Common myeloid progenitor, CD34-positive (primary cell): ENCODE measurements at regions of chr12 and their contacts with region 1.

Region 1: DNA sequence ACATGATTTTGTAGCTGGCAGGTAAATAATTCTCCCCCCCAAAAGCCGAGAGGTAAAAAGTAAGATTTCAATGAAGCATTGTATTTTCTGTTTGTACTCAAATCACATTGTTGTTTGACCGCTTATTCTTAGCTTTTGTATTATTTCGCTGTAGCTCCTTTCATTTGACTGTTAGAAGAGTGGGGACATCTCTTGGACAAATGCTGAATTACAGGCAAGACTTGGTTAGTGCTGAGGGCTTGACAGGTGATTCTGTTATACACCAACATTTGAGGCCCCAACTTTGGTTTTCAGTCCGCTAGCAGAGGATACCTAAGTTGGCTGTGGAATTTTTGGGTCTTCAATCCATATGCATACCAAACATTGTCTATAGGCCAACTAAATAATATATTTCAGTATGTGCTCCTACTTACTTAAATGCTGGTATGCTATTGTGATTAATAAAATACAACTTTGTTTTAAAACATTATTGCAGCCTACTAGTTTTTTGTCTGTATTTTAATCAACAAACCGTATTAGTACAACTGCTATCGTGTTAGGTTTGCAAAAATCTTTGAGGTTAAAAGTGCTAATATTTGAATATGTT is 102.2 kb downstream of the ERC1 start:
- DNase-seq: peak; percentile 74 to 86 (median 82)
- H3K4me3 ChIP-seq: no peak overlapping the region
- H3K27ac ChIP-seq: no peak overlapping the region
- H3K4me1 ChIP-seq: no peaks in the 10 kb centered on the region
- H3K27me3 ChIP-seq: no peaks in the 10 kb centered on the region

Region 2: GRCh38 chr12:1104088-1104800 is 11.0 kb after region 1 on chr12:
- CTCF ChIA-PET with region 1: interaction called, 14 read pairs
- POLR2A ChIA-PET with region 1: no interaction called
- DNase-seq: no peak
- H3K4me3 ChIP-seq: no peak overlapping the region
- H3K27ac ChIP-seq: no peak overlapping the region
- H3K4me1 ChIP-seq: peaks cover 0 to 16% (median 9%) of the 10 kb centered on the region in 4 experiments
- H3K27me3 ChIP-seq: no peaks in the 10 kb centered on the region